K562 (cell line): ENCODE measurements at regions of chr15 and their contacts with region 1.

Region 1: DNA sequence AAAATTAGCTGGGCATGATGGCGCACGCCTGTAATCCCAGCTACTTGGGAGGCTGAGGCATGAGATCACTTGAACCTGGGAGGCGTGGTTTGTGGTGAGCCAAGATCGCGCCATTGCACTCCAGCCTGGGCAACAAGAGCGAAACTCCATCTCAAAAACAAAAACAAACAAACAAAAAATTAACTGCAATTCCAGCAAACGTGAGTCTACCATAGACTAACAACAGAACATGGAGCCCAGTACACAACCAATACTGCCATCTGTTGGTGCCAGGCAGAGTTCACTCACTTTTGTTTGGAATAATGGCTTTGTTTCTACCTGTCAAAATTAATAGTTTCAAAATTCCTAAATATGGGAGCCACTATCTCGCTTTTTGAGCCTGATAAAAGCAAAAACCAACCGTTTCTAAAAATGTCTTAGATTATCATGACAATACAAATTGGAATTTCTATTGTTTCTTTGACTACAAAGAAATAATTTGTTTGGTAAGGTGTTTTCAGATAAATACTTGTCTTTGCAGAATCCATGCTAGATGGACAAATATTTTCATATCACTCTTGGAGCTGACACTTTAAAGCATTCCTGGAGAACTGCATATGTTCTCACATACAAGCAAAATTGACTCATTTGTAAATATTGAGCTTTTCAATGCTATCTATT is 45.0 kb downstream of the GPR176 start:
- DNase-seq: peak in 1 of 4 experiments; percentile 31
- ATAC-seq: peak; percentile 67
- H3K4me3 ChIP-seq: no peak overlapping the region
- H3K27ac ChIP-seq: no peak overlapping the region
- H3K4me1 ChIP-seq: peaks cover 3 to 7% of the 10 kb centered on the region in 2 experiments; a peak in 1 of 5 replicates
- H3K27me3 ChIP-seq: no peaks in the 10 kb centered on the region
- CTCF ChIP-seq: peak; percentile 57 to 71 (median 59)
- EP300 ChIP-seq: no peak
- POLR2A ChIP-seq: no peak
- RAD21 ChIP-seq: peak; percentile 65 to 75

Region 2: DNA sequence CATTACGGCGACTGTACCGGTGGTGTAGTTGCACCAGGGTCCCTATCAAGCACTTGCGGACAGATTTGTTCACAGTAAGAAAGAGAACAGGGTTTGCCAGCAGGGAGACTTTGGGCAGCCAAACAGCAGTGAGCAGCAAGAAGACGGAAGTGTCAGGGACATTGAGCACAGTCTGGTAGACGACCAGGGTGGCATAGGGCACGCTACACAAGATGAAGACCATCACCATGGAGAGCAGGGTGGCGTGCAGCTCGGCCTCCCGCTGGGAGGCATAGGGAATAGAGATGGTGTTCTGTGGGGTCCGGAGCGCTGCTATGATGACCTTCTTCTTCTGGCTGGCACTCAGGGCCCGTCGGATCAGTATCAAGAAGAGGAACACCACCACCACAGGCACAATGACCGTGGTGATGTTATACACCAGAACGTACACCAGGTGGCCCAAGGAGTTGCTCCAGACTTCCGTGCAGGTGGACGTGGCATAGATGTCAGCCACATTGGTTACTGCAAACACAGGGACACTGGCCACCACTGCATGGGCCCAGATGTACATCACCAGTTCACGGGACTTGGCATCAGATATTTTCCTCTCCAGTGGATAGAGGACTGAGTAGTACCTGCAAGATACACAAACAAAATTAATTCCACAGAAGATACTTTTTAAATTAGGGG is 73.2 kb before region 1 on chr15:
- CTCF ChIA-PET with region 1: interaction called, 4 read pairs
- POLR2A ChIA-PET with region 1: interaction called, 3 read pairs
- in situ Hi-C with region 1: no loop called
- intact Hi-C with region 1: loop called (anchors 1 kb)
- DNase-seq: peak; percentile 51 to 57 (median 52)
- ATAC-seq: peak; percentile 94
- H3K4me3 ChIP-seq: no peak overlapping the region
- H3K27ac ChIP-seq: no peak overlapping the region
- H3K4me1 ChIP-seq: no peaks in the 10 kb centered on the region
- H3K27me3 ChIP-seq: peaks cover 25 to 32% of the 10 kb centered on the region in 2 experiments
- CTCF ChIP-seq: peak; percentile 61 to 71 (median 67)
- EP300 ChIP-seq: no peak
- POLR2A ChIP-seq: no peak
- RAD21 ChIP-seq: peak; percentile 55 to 81